CD8-positive, alpha-beta T cell (primary cell): ENCODE measurements at regions of chr10 and their contacts with region 1.

Region 1: GRCh38 chr10:63286754-63287264 is 153.7 kb downstream of the NRBF2 start:
- DNase-seq: no peak
- ATAC-seq: no peak
- H3K4me3 ChIP-seq: no peak overlapping the region
- H3K4me3 Mint-ChIP-seq: no peak overlapping the region
- H3K27ac ChIP-seq: no peak overlapping the region
- H3K27ac Mint-ChIP-seq: no peak overlapping the region
- H3K4me1 ChIP-seq: no peaks in the 10 kb centered on the region
- H3K4me1 Mint-ChIP-seq: peaks cover 13% of the 10 kb centered on the region
- H3K27me3 ChIP-seq: no peaks in the 10 kb centered on the region
- H3K27me3 Mint-ChIP-seq: no peaks in the 10 kb centered on the region
- CTCF ChIP-seq: no peak

Region 2: GRCh38 chr10:63343476-63343875 is 56.7 kb after region 1 on chr10:
- CTCF ChIA-PET with region 1: no interaction called
- POLR2A ChIA-PET with region 1: no interaction called
- intact Hi-C with region 1: loop called in 1 of 2 experiments (anchors 5 kb)
- DNase-seq: no peak
- ATAC-seq: no peak
- H3K4me3 ChIP-seq: no peak overlapping the region
- H3K4me3 Mint-ChIP-seq: no peak overlapping the region
- H3K27ac ChIP-seq: no peak overlapping the region
- H3K27ac Mint-ChIP-seq: no peak overlapping the region
- H3K4me1 ChIP-seq: no peaks in the 10 kb centered on the region
- H3K4me1 Mint-ChIP-seq: peaks cover 11% of the 10 kb centered on the region
- H3K27me3 ChIP-seq: no peaks in the 10 kb centered on the region
- H3K27me3 Mint-ChIP-seq: no peaks in the 10 kb centered on the region
- CTCF ChIP-seq: no peak

Region 3: DNA sequence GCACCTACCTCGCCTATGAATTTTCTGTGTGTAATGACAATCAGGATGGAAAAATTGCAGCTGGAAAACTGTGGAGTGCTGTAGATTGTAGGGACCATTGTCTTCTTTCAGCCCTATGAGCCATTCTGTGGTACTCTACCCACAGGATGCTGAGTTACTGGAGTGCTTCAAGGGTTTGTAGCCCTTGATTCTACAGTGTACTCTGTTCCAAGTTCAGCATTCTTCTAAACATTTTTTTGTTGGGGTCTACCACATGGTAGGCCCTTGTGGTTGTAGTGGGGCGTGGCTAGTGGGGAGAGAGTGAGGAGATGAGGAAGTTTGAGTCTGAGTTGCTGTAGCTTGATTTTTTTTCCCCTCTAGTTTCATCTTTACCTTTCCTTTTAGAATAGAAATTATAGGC is 267.8 kb after region 1 on chr10:
- CTCF ChIA-PET with region 1: no interaction called
- POLR2A ChIA-PET with region 1: no interaction called
- intact Hi-C with region 1: no loop called
- DNase-seq: peak; percentile 35 to 89 (median 63)
- ATAC-seq: peak; percentile 100
- H3K4me3 ChIP-seq: no peak overlapping the region
- H3K4me3 Mint-ChIP-seq: no peak overlapping the region
- H3K27ac ChIP-seq: peak overlapping the region in 1 of 2 experiments; percentile 45
- H3K27ac Mint-ChIP-seq: peak overlapping the region; percentile 67
- H3K4me1 ChIP-seq: peaks cover 17% of the 10 kb centered on the region
- H3K4me1 Mint-ChIP-seq: peaks cover 24% of the 10 kb centered on the region
- H3K27me3 ChIP-seq: no peaks in the 10 kb centered on the region
- H3K27me3 Mint-ChIP-seq: no peaks in the 10 kb centered on the region
- CTCF ChIP-seq: no peak